ENCODE measurements at regions of chr2 and their contacts with region 1.

Region 1: GRCh38 chr2:66429071-66429477 is 5.9 kb upstream of the MEIS1 start:
- DNase-seq: no peak
- CTCF ChIP-seq: peak; percentile 73

Region 2: GRCh38 chr2:66105066-66105753 is 323.9 kb before region 1 on chr2:
- CTCF ChIA-PET with region 1: no interaction called
- POLR2A ChIA-PET with region 1: no interaction called
- DNase-seq: no peak
- CTCF ChIP-seq: no peak

Region 3: GRCh38 chr2:66382091-66382490 is 47.0 kb before region 1 on chr2:
- CTCF ChIA-PET with region 1: no interaction called
- POLR2A ChIA-PET with region 1: no interaction called
- DNase-seq: no peak
- CTCF ChIP-seq: no peak

Region 4: GRCh38 chr2:66414896-66415295 is 14.2 kb before region 1 on chr2:
- CTCF ChIA-PET with region 1: interaction called, 12 read pairs
- POLR2A ChIA-PET with region 1: no interaction called
- DNase-seq: no peak
- CTCF ChIP-seq: no peak

Measured in GM10248 (cell line).